Esophagus muscularis mucosa (tissue), 4 donors: ENCODE measurements at regions of chr12 and their contacts with region 1.

Region 1: DNA sequence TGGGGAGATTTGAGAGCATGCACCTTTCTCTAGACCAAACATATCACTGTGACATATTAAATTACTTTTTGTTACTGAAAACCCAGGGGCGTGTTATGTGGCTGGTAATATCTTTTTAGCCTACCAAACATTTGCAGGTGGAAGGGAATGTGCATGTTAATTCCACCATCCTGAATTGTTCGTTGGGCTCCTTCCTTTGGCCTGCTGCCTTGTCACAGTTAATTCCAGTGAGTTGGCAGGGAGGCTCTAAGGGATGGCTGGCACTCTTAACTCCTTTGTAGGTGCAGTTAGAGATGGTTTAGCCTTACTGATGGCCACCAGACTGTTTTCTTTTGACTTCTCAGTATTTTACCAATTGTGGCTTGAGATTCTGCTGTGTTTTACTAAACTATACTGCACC is 64.5 kb downstream of the DIP2B start:
- DNase-seq: no peak
- H3K4me3 ChIP-seq: no peak overlapping the region
- H3K27ac ChIP-seq: peak overlapping the region; percentile 16 to 71 (median 42)
- H3K4me1 ChIP-seq: peaks cover 55 to 79% (median 74%) of the 10 kb centered on the region in 4 donors
- H3K27me3 ChIP-seq: no peaks in the 10 kb centered on the region
- CTCF ChIP-seq: no peak
- EP300 ChIP-seq: no peak
- POLR2A ChIP-seq: no peak

Region 2: GRCh38 chr12:50458606-50459005 is 110.7 kb before region 1 on chr12:
- intact Hi-C with region 1: no loop called
- DNase-seq: no peak
- H3K4me3 ChIP-seq: no peak overlapping the region
- H3K27ac ChIP-seq: no peak overlapping the region
- H3K4me1 ChIP-seq: no peaks in the 10 kb centered on the region
- H3K27me3 ChIP-seq: no peaks in the 10 kb centered on the region
- CTCF ChIP-seq: no peak
- EP300 ChIP-seq: no peak
- POLR2A ChIP-seq: no peak

Region 3: GRCh38 chr12:50620109-50620977 is 51.0 kb after region 1 on chr12:
- intact Hi-C with region 1: loop called (anchors 5 kb)
- DNase-seq: no peak
- H3K4me3 ChIP-seq: no peak overlapping the region
- H3K27ac ChIP-seq: no peak overlapping the region
- H3K4me1 ChIP-seq: peaks cover 44 to 84% (median 68%) of the 10 kb centered on the region in 4 donors
- H3K27me3 ChIP-seq: no peaks in the 10 kb centered on the region
- CTCF ChIP-seq: no peak
- EP300 ChIP-seq: no peak
- POLR2A ChIP-seq: no peak